Activated CD4-positive, alpha-beta T cell treated with anti-CD3 and anti-CD28 coated beads for 36 hours (primary cell): ENCODE measurements at regions of chr12 and their contacts with region 1.

Region 1: GRCh38 chr12:50517456-50518048 is 12.8 kb downstream of the DIP2B start:
- DNase-seq: no peak
- ATAC-seq: peak; percentile 89
- H3K4me3 Mint-ChIP-seq: no peak overlapping the region
- H3K27ac Mint-ChIP-seq: no peak overlapping the region
- H3K4me1 Mint-ChIP-seq: peaks cover 37% of the 10 kb centered on the region
- H3K27me3 Mint-ChIP-seq: no peaks in the 10 kb centered on the region

Region 2: DNA sequence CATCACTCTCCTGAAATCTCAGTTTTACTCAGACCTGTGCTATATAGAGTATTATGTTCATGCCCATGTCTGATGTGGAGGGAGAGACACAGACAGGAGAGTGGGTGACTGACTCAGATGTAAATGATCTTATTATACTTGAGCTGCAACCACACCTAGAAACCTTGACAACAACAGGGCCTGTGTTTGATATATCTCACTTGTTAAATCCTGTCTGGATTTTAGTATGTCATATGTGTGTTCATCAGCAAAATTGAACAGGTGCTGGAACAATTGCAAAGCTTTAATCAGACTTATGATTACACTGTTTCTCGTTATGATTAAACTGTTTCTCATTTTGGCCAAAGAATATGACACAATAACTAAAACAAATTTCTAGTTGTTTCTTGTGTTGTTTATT is 24.9 kb after region 1 on chr12:
- CTCF ChIA-PET with region 1: interaction called, 6 read pairs
- POLR2A ChIA-PET with region 1: interaction called, 24 read pairs
- intact Hi-C with region 1: loop called in 1 of 2 experiments (anchors 1 kb)
- DNase-seq: peak; percentile 59
- ATAC-seq: peak; percentile 98
- H3K4me3 Mint-ChIP-seq: no peak overlapping the region
- H3K27ac Mint-ChIP-seq: peak overlapping the region; percentile 92
- H3K4me1 Mint-ChIP-seq: peaks cover 61% of the 10 kb centered on the region
- H3K27me3 Mint-ChIP-seq: no peaks in the 10 kb centered on the region

Region 3: DNA sequence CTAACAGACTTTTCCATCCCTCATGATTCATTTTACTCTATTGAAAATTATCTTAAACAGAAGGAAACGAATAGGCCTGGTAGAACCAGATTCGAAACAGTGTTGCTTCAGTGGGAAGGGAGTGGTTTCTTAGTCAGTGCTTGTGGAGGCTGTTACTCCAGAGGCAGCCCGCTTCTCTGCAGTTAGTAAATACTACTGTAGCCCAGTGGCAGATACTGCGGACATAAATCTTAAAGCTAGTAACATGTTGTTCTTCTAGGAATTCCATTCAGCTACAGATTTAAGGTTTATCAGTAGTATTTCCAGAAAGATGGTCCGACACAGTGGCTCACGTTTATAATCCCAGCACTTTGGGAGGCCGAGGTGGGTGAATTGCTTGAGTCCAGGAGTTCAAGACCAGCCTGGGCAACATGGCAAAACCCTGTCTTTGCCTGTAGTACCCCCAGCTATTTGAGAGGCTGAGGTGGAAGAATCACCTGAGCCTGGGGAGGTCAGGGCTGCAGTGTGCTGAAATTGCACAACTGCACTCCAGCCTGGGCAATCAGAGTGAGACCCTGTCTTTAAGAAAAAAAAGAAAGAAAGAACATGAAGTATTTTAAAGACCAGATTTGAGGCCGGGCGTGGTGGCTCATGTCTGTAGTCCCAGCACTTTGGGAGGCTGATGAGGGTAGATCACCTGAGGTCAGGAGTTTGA is 33.1 kb after region 1 on chr12:
- CTCF ChIA-PET with region 1: no interaction called
- POLR2A ChIA-PET with region 1: interaction called, 3 read pairs
- intact Hi-C with region 1: loop called (anchors 1 kb)
- DNase-seq: no peak
- ATAC-seq: no peak
- H3K4me3 Mint-ChIP-seq: no peak overlapping the region
- H3K27ac Mint-ChIP-seq: no peak overlapping the region
- H3K4me1 Mint-ChIP-seq: peaks cover 66% of the 10 kb centered on the region
- H3K27me3 Mint-ChIP-seq: no peaks in the 10 kb centered on the region

Region 4: DNA sequence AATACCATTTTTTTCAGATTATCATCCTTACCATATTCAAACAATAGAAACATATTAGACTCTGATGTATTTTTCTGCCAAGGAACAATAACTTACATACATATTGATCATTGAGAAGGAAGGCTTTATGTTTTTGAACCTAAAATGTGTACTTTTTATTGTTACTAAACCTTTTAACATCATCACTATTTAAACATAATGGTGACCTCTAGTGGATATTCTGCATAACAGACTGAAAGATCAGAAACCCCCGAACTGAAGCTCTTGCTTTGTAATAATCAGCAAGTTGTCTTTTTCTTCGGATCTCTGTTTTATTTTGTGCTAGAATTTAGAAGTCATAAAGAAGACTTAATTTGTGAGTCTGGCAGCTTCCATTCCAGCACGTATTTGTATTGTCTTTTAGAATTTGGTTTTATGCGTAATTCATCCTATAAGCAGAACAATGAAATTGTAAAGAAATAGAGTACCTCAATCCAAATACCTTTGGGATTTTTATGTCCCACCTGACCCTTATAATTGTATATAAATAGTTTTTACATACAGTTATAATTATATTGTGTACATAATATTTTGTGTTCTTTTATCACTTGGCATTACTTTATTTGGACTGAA is 120.4 kb after region 1 on chr12:
- CTCF ChIA-PET with region 1: interaction called, 17 read pairs
- POLR2A ChIA-PET with region 1: no interaction called
- intact Hi-C with region 1: no loop called
- DNase-seq: no peak
- ATAC-seq: peak; percentile 42
- H3K4me3 Mint-ChIP-seq: no peak overlapping the region
- H3K27ac Mint-ChIP-seq: peak overlapping the region; percentile 49
- H3K4me1 Mint-ChIP-seq: peaks cover 44% of the 10 kb centered on the region
- H3K27me3 Mint-ChIP-seq: no peaks in the 10 kb centered on the region